Activated naive CD8-positive, alpha-beta T cell treated with anti-CD3 and anti-CD28 coated beads, Interleukin-2, amount 10 ng/mL, durations not matched to agents 7 days and 5 days (primary cell): ENCODE measurements at regions of chr19 and their contacts with region 1.

Region 1: DNA sequence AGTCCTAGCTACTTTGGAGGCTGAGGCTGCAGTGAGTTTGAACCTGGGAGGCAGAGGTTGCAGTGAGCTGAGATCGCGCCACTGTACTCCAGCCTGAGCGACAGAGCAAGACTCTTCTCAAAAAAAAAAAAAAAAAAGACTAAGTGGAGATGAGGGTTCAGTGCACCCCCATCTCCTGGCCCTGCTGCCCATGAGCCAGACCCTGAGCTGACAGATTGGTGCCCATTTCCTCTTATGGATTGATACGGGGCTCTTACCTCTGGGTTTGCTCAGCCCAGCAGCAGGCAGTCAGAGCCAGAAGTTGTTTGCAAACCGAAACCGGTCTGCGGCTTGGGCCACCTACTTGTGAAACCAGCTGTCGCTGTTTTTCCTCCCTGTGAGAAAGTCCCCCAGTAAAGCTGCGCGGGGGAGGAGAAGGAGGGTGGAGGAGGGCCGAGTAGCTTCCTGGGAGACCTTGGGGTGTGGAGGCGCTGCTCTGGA is 36.9 kb downstream of the ARRDC2 start:
- DNase-seq: peak; percentile 84
- ATAC-seq: peak; percentile 97
- H3K4me3 Mint-ChIP-seq: peak overlapping the region; percentile 85
- H3K27ac Mint-ChIP-seq: peak overlapping the region; percentile 94
- H3K4me1 Mint-ChIP-seq: peaks cover 20% of the 10 kb centered on the region
- H3K27me3 Mint-ChIP-seq: peaks cover 11% of the 10 kb centered on the region

Region 2: GRCh38 chr19:17969096-17969792 is 75.6 kb before region 1 on chr19:
- POLR2A ChIA-PET with region 1: no interaction called
- DNase-seq: no peak
- ATAC-seq: no peak
- H3K4me3 Mint-ChIP-seq: no peak overlapping the region
- H3K27ac Mint-ChIP-seq: no peak overlapping the region
- H3K4me1 Mint-ChIP-seq: peaks cover 5% of the 10 kb centered on the region
- H3K27me3 Mint-ChIP-seq: peaks cover 40% of the 10 kb centered on the region

Region 3: GRCh38 chr19:18007044-18007916 is 37.6 kb before region 1 on chr19:
- POLR2A ChIA-PET with region 1: interaction called, 24 read pairs
- DNase-seq: peak; percentile 90
- ATAC-seq: peak; percentile 58
- H3K4me3 Mint-ChIP-seq: peak overlapping the region; percentile 87
- H3K27ac Mint-ChIP-seq: peak overlapping the region; percentile 86
- H3K4me1 Mint-ChIP-seq: peaks cover 20% of the 10 kb centered on the region
- H3K27me3 Mint-ChIP-seq: no peaks in the 10 kb centered on the region

Region 4: DNA sequence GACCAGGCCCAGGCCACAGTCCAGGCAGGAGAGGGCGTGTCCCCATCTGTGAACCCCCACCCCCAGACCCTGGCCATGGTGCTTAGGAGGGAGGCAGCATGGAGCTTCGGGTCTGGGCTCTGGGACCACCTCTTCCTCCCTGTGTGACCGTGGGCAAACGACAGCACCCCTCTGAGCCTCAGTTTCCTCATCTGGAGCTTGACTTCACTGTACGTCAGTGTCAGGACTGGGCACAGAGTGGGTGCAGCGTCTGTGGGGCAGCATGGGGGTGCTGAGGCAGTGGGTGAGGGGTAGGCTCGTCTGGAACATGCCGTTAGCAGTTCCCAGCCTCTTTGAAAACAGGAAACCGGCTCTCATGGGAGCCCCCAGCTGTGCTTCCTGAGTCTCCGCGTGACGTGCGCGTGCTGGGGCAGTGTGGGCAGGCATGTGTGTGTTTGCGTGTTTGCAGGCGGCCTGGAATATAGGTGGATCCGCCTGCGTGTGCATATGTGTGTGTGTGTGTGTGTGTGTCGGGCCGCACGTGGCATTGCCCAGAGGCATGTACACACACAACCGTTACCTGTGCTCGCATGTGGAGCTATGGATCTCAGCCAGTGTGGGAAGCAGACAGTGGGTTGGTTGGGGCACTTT is 21.1 kb before region 1 on chr19:
- POLR2A ChIA-PET with region 1: interaction called, 15 read pairs
- DNase-seq: peak; percentile 62
- ATAC-seq: peak; percentile 37
- H3K4me3 Mint-ChIP-seq: peak overlapping the region; percentile 77
- H3K27ac Mint-ChIP-seq: peak overlapping the region; percentile 90
- H3K4me1 Mint-ChIP-seq: peaks cover 40% of the 10 kb centered on the region
- H3K27me3 Mint-ChIP-seq: peaks cover 1% of the 10 kb centered on the region

Region 5: GRCh38 chr19:18058208-18059030 is 13.6 kb after region 1 on chr19:
- POLR2A ChIA-PET with region 1: interaction called, 11 read pairs
- DNase-seq: peak; percentile 88
- ATAC-seq: peak; percentile 82
- H3K4me3 Mint-ChIP-seq: peak overlapping the region; percentile 55
- H3K27ac Mint-ChIP-seq: peak overlapping the region; percentile 75
- H3K4me1 Mint-ChIP-seq: peaks cover 16% of the 10 kb centered on the region
- H3K27me3 Mint-ChIP-seq: no peaks in the 10 kb centered on the region

Region 6: GRCh38 chr19:18173572-18174288 is 128.9 kb after region 1 on chr19 and contains the start of gene IFI30:
- POLR2A ChIA-PET with region 1: no interaction called
- DNase-seq: peak; percentile 80
- ATAC-seq: peak; percentile 72
- H3K4me3 Mint-ChIP-seq: peak within 1 kb of the TSS; percentile 87
- H3K27ac Mint-ChIP-seq: peak within 1 kb of the TSS; percentile 86
- H3K4me1 Mint-ChIP-seq: peaks cover 28% of the 10 kb centered on the region
- H3K27me3 Mint-ChIP-seq: no peaks in the 10 kb centered on the region
- total RNA-seq, gene IFI30: 78.8 to 80.8 TPM